Natural killer cell (primary cell): ENCODE measurements at regions of chr5 and their contacts with region 1.

Region 1: GRCh38 chr5:102856389-102856777 is 101.3 kb downstream of the PAM start:
- DNase-seq: no peak
- ATAC-seq: peak in 1 of 3 donors; percentile 6
- H3K4me3 ChIP-seq: no peak overlapping the region
- H3K4me3 Mint-ChIP-seq: peak overlapping the region; percentile 89
- H3K27ac ChIP-seq: peak overlapping the region; percentile 39
- H3K27ac Mint-ChIP-seq: peak overlapping the region; percentile 91 to 92
- H3K4me1 ChIP-seq: peaks cover 15% of the 10 kb centered on the region
- H3K4me1 Mint-ChIP-seq: peaks cover 63 to 64% of the 10 kb centered on the region in 2 donors
- H3K27me3 ChIP-seq: no peaks in the 10 kb centered on the region
- H3K27me3 Mint-ChIP-seq: no peaks in the 10 kb centered on the region
- CTCF ChIP-seq: no peak

Region 2: DNA sequence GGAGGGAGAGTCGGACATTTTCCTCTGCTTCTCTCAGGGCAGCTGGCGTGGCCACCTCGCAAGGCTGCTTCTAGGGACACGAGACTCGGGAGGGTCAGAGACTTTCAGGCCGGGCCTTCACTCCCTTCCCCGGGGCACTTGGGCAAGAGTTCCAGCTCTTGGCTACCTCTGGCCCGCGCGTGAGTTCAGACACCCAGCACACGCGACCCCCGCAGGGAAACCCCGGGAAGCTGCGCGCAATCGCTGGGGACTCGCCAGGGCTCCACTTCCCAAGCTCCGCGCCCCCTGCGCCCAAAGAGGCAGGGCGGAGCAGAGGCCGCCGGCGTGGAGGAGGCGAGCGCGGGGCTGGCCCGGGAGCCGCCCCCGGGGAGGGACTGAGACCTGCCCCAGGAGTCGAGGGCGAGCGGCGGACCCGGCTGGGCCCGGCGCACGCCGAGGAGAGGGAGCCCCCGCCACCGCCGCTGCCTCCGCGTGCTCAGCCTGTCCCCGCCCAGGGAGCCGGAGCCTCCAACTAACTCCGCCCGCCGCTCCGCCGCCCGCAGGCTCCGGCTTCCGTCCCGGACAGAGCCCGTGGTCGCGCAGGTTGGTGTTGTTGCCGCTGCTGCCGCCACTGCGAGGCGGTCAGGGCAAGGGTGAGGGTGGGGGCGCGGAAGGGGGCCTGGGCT is 101.5 kb before region 1 on chr5 and contains the start of gene PAM:
- intact Hi-C with region 1: loop called (anchors 5 kb)
- DNase-seq: peak; percentile 71 to 80
- ATAC-seq: peak; percentile 79 to 91 (median 88)
- H3K4me3 ChIP-seq: peak within 1 kb of the TSS; percentile 68
- H3K4me3 Mint-ChIP-seq: peak within 1 kb of the TSS; percentile 97
- H3K27ac ChIP-seq: peak within 1 kb of the TSS; percentile 74
- H3K27ac Mint-ChIP-seq: peak within 1 kb of the TSS; percentile 94 to 98
- H3K4me1 ChIP-seq: peaks cover 19% of the 10 kb centered on the region
- H3K4me1 Mint-ChIP-seq: peaks cover 25 to 28% of the 10 kb centered on the region in 2 donors
- H3K27me3 ChIP-seq: no peaks in the 10 kb centered on the region
- H3K27me3 Mint-ChIP-seq: peaks cover 7 to 11% of the 10 kb centered on the region in 2 donors
- CTCF ChIP-seq: no peak
- total RNA-seq, gene PAM: 67.6 to 79.9 (median 75.3) TPM

Region 3: GRCh38 chr5:102801371-102801770 is 55.0 kb before region 1 on chr5:
- intact Hi-C with region 1: loop called (anchors 2 kb)
- DNase-seq: peak in 1 of 2 donors; percentile 73
- ATAC-seq: peak; percentile 96 to 100 (median 96)
- H3K4me3 ChIP-seq: no peak overlapping the region
- H3K4me3 Mint-ChIP-seq: peak overlapping the region; percentile 84
- H3K27ac ChIP-seq: peak overlapping the region; percentile 52
- H3K27ac Mint-ChIP-seq: peak overlapping the region; percentile 59 to 91
- H3K4me1 ChIP-seq: peaks cover 21% of the 10 kb centered on the region
- H3K4me1 Mint-ChIP-seq: peaks cover 59 to 77% of the 10 kb centered on the region in 2 donors
- H3K27me3 ChIP-seq: no peaks in the 10 kb centered on the region
- H3K27me3 Mint-ChIP-seq: no peaks in the 10 kb centered on the region
- CTCF ChIP-seq: no peak

Region 4: DNA sequence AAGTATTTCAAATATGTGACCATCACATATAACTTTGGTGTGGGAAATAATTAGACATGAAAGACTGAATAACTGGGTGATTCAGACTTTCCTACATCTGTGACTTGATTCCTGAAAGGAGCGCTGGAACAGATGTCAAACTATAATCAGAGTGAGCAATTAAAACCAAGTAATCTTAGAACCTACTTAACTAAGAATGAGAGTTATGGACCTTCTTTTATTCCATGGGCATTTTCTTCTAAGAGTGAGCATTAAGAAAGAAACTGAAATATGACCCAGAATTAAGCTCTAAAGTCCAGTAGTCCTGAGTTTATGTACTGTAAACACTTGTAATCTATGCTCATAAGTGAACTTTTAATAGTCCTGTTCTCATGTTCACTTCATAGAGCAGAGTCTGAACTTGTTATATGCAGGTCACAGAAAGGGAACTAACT is 32.9 kb before region 1 on chr5:
- intact Hi-C with region 1: no loop called
- DNase-seq: no peak
- ATAC-seq: no peak
- H3K4me3 ChIP-seq: no peak overlapping the region
- H3K4me3 Mint-ChIP-seq: no peak overlapping the region
- H3K27ac ChIP-seq: no peak overlapping the region
- H3K27ac Mint-ChIP-seq: peak overlapping the region in 1 of 2 donors; percentile 35
- H3K4me1 ChIP-seq: no peaks in the 10 kb centered on the region
- H3K4me1 Mint-ChIP-seq: peaks cover 4 to 11% of the 10 kb centered on the region in 2 donors
- H3K27me3 ChIP-seq: no peaks in the 10 kb centered on the region
- H3K27me3 Mint-ChIP-seq: no peaks in the 10 kb centered on the region
- CTCF ChIP-seq: no peak